Endothelial cell of umbilical vein (primary cell): ENCODE measurements at regions of chr3 and their contacts with region 1.

Region 1: DNA sequence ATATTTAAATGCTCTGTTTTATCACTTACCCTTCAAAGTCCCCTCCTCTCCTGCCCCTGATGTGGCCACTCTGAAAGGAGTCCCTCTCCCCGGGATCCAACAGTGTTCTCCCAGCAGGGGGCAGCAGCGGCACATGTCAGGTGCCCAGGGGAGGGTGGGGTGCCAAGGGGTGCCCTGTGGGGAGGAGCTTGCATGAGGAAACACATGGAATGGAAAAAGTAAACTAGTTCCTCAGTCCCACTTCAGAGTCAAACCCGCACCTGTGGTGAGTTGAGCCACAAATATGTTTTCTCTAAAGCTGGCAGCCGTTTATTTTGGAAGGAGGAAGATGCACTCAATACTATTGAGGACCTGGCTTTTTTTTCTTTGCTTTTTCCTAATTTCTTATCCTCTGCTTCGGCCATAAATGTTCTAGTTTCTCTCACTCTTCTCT is 30.1 kb upstream of the NRROS start:
- DNase-seq: peak; percentile 84
- H3K4me3 ChIP-seq: no peak overlapping the region
- H3K27ac ChIP-seq: no peak overlapping the region
- H3K4me1 ChIP-seq: peaks cover 28% of the 10 kb centered on the region
- H3K27me3 ChIP-seq: peaks cover 0 to 3% of the 10 kb centered on the region in 2 experiments
- CTCF ChIP-seq: peak; percentile 68 to 85
- POLR2A ChIP-seq: no peak

Region 2: GRCh38 chr3:196620161-196620604 is 10.8 kb after region 1 on chr3:
- CTCF ChIA-PET with region 1: interaction called, 10 read pairs
- POLR2A ChIA-PET with region 1: no interaction called
- dilution Hi-C with region 1: no loop called
- intact Hi-C with region 1: no loop called
- DNase-seq: no peak
- H3K4me3 ChIP-seq: no peak overlapping the region
- H3K27ac ChIP-seq: peak overlapping the region; percentile 8
- H3K4me1 ChIP-seq: peaks cover 10% of the 10 kb centered on the region
- H3K27me3 ChIP-seq: no peaks in the 10 kb centered on the region
- CTCF ChIP-seq: no peak
- POLR2A ChIP-seq: no peak

Region 3: DNA sequence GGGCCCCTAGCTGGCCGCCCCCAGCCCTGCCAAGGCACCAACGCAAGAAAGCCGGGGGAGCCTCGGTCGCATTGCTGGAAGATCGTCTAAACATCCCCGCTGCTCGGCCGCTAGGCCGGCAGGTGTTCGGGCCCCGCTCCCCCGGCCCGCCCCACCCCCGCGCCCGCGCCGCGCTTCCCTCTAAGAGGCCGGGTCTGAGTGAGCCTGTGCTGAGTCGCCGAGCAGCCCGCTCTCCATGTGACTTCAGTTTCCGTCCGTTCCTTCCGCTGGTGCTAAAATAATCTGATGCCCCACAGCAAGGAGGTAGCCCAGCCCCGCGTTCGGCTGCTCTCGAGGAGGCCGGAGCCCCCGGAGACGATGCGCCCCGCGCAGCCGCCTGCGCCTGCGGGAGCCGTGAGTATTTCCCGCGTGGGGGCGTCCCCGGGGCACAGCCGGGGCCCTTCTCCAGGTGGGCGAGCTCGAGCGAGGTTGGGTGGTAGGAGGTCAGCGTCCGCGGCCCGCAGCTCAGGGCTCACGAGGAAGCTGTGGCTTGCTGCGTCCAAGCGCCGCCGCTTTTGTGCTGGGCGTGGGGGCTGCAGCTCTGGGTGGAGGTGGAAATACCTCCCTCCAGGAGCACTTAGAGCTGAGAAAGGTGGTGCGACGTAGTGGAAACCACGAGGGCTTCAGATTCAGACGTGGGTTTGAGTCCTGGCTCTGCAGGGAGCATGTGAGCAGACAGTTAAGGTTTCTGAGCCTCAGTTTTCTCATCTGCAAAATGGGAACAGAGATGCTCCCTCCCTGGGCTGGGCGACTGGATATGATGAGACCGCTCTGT is 30.3 kb after region 1 on chr3 and contains the start of gene NRROS:
- CTCF ChIA-PET with region 1: interaction called, 25 read pairs
- POLR2A ChIA-PET with region 1: no interaction called
- dilution Hi-C with region 1: no loop called
- intact Hi-C with region 1: loop called (anchors 1 kb)
- DNase-seq: peak; percentile 55
- H3K4me3 ChIP-seq: peak within 1 kb of the TSS; percentile 17 to 42 (median 42)
- H3K27ac ChIP-seq: no peak within 1 kb of the TSS
- H3K4me1 ChIP-seq: peaks cover 6% of the 10 kb centered on the region
- H3K27me3 ChIP-seq: peaks cover 0 to 3% of the 10 kb centered on the region in 2 experiments
- CTCF ChIP-seq: no peak
- POLR2A ChIP-seq: no peak
- total RNA-seq, gene NRROS: 14.4 and 15.6 TPM in 2 replicates

Region 4: DNA sequence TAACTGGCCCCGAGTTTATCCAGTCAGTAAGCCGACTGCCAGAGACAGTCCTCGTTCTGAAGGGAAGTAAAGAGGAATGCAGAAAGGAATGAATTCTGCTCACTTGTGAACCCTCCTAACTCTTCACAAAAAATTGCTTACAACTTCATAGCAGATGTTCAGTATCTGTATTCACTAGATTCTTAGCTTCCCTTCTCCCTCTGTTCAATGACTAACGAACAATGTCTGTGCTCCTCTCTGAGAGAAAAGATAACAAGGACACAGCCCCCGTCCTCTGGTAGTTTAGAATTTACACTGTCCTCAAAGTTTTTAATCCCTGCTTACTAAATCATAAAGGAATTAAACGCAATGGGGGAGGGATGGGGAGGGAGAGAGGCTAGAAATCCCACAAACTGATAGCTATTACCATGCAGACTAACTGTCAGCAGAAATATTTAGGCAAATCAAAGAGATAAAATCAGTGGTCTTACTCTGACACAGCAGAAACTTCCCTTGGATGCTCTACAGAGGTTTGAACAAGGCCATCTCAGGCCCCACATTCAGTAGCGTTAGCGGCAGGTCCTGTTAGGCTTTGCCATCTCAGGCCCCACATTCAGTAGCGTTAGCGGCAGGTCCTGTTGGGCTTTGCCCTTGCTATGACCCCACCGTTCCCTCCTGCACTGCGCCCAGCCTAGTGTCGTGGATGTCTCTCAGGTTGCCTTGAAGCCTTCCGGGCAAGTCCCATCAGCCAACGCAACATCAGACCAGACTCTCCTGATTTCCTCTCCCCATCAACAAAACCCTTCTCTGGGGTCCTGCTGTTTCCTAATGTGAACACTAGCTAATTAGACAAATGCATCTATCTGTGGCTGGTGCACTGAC is 53.6 kb after region 1 on chr3:
- CTCF ChIA-PET with region 1: interaction called, 11 read pairs
- POLR2A ChIA-PET with region 1: no interaction called
- dilution Hi-C with region 1: no loop called
- intact Hi-C with region 1: no loop called
- DNase-seq: no peak
- H3K4me3 ChIP-seq: no peak overlapping the region
- H3K27ac ChIP-seq: no peak overlapping the region
- H3K4me1 ChIP-seq: no peaks in the 10 kb centered on the region
- H3K27me3 ChIP-seq: peaks cover 0 to 2% of the 10 kb centered on the region in 2 experiments
- CTCF ChIP-seq: no peak
- POLR2A ChIP-seq: no peak

Region 5: DNA sequence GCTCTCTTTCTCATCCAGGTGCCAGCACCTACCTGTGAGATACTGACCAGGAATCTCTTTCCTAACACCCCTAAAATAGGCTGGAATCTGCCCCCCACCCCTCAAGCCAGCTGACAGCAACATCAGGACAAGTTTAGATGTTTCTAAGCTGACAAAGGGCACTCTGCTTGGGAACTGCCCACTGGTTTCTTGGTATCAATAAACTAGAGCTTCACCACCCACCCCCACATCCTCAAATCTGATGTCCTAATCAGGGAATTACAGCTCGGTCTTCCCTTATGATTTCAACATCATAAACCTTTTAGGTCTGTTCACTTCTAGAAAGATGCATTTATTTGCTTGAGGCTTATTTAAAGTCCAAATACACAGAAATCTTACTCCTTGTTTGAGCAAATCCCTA is 68.0 kb after region 1 on chr3:
- CTCF ChIA-PET with region 1: interaction called, 19 read pairs
- POLR2A ChIA-PET with region 1: no interaction called
- dilution Hi-C with region 1: no loop called
- intact Hi-C with region 1: no loop called
- DNase-seq: no peak
- H3K4me3 ChIP-seq: no peak overlapping the region
- H3K27ac ChIP-seq: no peak overlapping the region
- H3K4me1 ChIP-seq: no peaks in the 10 kb centered on the region
- H3K27me3 ChIP-seq: peaks cover 11 to 13% of the 10 kb centered on the region in 2 experiments
- CTCF ChIP-seq: no peak
- POLR2A ChIP-seq: no peak

Region 6: DNA sequence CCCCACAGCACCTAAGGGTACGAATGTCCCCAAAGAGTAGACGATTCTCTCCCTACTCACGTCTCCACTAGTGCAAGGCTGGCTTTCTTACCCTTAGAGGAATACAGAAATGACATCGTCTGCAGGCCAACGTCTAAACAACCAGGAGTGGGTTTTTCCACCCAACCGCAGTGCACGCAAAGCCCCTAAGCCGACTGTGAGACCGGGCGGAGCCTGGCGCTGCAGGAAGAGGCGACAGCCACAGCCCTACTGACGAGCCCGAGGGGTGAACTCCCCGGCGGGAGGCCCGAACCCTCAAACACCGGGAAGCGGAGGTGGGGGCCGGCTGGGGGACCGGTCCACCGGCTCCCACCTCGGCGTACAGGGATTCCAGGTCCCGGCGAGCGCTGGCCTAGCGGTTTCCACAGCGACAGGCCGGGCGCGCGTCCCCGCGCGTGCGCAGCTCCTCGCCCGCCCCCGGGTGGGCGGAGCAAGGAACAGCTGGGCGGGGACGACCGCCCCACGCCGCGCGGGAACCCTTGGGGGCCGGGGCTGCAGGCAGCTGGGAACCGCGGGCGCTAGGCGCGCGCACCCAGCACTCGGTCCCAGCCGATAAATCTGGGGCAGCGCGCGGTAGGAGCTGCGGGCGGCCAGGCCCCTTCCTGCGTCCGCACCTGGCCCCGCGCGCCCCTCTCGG is 102.6 kb after region 1 on chr3 and contains the starts of genes CEP19 and PIGX:
- CTCF ChIA-PET with region 1: interaction called, 11 read pairs
- POLR2A ChIA-PET with region 1: no interaction called
- dilution Hi-C with region 1: no loop called
- intact Hi-C with region 1: no loop called
- DNase-seq: peak; percentile 84
- H3K4me3 ChIP-seq: peak within 1 kb of the TSS; percentile 40 to 72 (median 67)
- H3K27ac ChIP-seq: peak within 1 kb of the TSS; percentile 36
- H3K4me1 ChIP-seq: peaks cover 7% of the 10 kb centered on the region
- H3K27me3 ChIP-seq: no peaks in the 10 kb centered on the region
- CTCF ChIP-seq: no peak
- POLR2A ChIP-seq: peak; percentile 62
- total RNA-seq, gene CEP19: 1.2 and 1.6 TPM in 2 replicates
- total RNA-seq, gene PIGX: 12.4 and 14.0 TPM in 2 replicates

Region 7: GRCh38 chr3:196969660-196970546 is 360.5 kb after region 1 on chr3:
- CTCF ChIA-PET with region 1: interaction called, 6 read pairs
- POLR2A ChIA-PET with region 1: no interaction called
- dilution Hi-C with region 1: no loop called
- intact Hi-C with region 1: loop called (anchors 1 kb)
- DNase-seq: peak; percentile 57
- H3K4me3 ChIP-seq: peak overlapping the region; percentile 60 to 81 (median 65)
- H3K27ac ChIP-seq: no peak overlapping the region
- H3K4me1 ChIP-seq: peaks cover 3% of the 10 kb centered on the region
- H3K27me3 ChIP-seq: peaks cover 0 to 2% of the 10 kb centered on the region in 2 experiments
- CTCF ChIP-seq: peak; percentile 59 to 68
- POLR2A ChIP-seq: peak; percentile 38

Region 8: GRCh38 chr3:197029511-197030167 is 420.3 kb after region 1 on chr3 and contains the start of gene MELTF:
- CTCF ChIA-PET with region 1: no interaction called
- POLR2A ChIA-PET with region 1: no interaction called
- dilution Hi-C with region 1: no loop called
- intact Hi-C with region 1: no loop called
- DNase-seq: peak; percentile 25
- H3K4me3 ChIP-seq: peak within 1 kb of the TSS in 2 of 3 experiments; percentile 14 to 22
- H3K27ac ChIP-seq: no peak within 1 kb of the TSS
- H3K4me1 ChIP-seq: peaks cover 9% of the 10 kb centered on the region
- H3K27me3 ChIP-seq: peaks cover 0 to 1% of the 10 kb centered on the region in 2 experiments
- CTCF ChIP-seq: peak; percentile 56 to 80
- POLR2A ChIP-seq: no peak
- total RNA-seq, gene MELTF: 1.3 and 2.3 TPM in 2 replicates